H1 (cell line): ENCODE measurements at regions of chr5 and their contacts with region 1.

Region 1: GRCh38 chr5:151164686-151165392 is 7.3 kb upstream of the ANXA6 start:
- DNase-seq: peak in 1 of 2 experiments; percentile 85
- H3K4me3 ChIP-seq: no peak overlapping the region
- H3K27ac ChIP-seq: no peak overlapping the region
- H3K4me1 ChIP-seq: no peaks in the 10 kb centered on the region; a peak in 1 of 7 replicates
- H3K27me3 ChIP-seq: no peaks in the 10 kb centered on the region
- CTCF ChIP-seq: peak; percentile 64 to 95 (median 92)
- EP300 ChIP-seq: no peak
- POLR2A ChIP-seq: no peak
- RAD21 ChIP-seq: peak; percentile 96 to 99

Region 2: GRCh38 chr5:151002250-151002649 is 162.6 kb before region 1 on chr5:
- CTCF ChIA-PET with region 1: interaction called, 26 read pairs
- POLR2A ChIA-PET with region 1: no interaction called
- DNase-seq: peak in 1 of 2 experiments; percentile 42
- H3K4me3 ChIP-seq: no peak overlapping the region
- H3K27ac ChIP-seq: no peak overlapping the region
- H3K4me1 ChIP-seq: peaks cover 0 to 3% (median 0%) of the 10 kb centered on the region in 4 experiments; a peak in 1 of 7 replicates
- H3K27me3 ChIP-seq: no peaks in the 10 kb centered on the region
- CTCF ChIP-seq: peak in 2 of 3 experiments; percentile 37 to 57; a peak in 2 of 4 replicates
- EP300 ChIP-seq: no peak
- POLR2A ChIP-seq: no peak
- RAD21 ChIP-seq: peak; percentile 73 to 78

Region 3: DNA sequence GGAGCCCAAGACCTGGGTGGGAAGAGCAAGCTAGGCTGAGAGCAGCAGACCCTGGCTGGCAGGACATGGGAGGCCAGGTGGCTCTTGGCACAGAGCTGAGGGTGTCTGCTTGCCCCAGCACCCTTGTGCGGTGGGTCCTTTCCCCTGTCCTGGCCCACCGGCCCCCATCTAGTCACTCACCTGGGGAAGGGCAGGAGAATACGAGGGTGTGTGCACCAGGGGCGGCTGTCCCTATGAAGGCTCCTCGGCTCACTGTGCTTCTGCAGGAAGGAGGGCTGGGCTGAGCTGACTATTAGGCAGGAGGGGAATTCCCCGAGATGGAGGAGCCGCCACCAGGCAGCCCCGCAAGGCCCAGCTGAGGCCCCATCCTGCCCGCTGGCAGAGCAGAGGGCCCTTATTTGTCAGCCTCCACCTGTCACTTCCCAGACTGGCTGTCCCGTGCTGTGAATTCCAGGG is 77.9 kb before region 1 on chr5:
- CTCF ChIA-PET with region 1: interaction called, 10 read pairs
- POLR2A ChIA-PET with region 1: no interaction called
- DNase-seq: no peak
- H3K4me3 ChIP-seq: no peak overlapping the region
- H3K27ac ChIP-seq: no peak overlapping the region
- H3K4me1 ChIP-seq: peaks cover 0 to 4% (median 1%) of the 10 kb centered on the region in 4 experiments; a peak in 4 of 7 replicates
- H3K27me3 ChIP-seq: no peaks in the 10 kb centered on the region; a peak in 2 of 7 replicates
- CTCF ChIP-seq: no peak
- EP300 ChIP-seq: no peak
- POLR2A ChIP-seq: no peak
- RAD21 ChIP-seq: no peak

Region 4: GRCh38 chr5:151150471-151151262 is 14.2 kb before region 1 on chr5:
- CTCF ChIA-PET with region 1: interaction called, 810 read pairs
- POLR2A ChIA-PET with region 1: interaction called, 3 read pairs
- DNase-seq: no peak
- H3K4me3 ChIP-seq: no peak overlapping the region
- H3K27ac ChIP-seq: no peak overlapping the region
- H3K4me1 ChIP-seq: peaks cover 0 to 9% (median 4%) of the 10 kb centered on the region in 4 experiments; a peak in 4 of 7 replicates
- H3K27me3 ChIP-seq: no peaks in the 10 kb centered on the region
- CTCF ChIP-seq: no peak
- EP300 ChIP-seq: no peak
- POLR2A ChIP-seq: 0 out of 3 replicates have a peak, but pooled peaks of 1 of the 2 experiments have one; percentile 28
- RAD21 ChIP-seq: no peak